PC-3 (cell line): ENCODE measurements at regions of chr4 and their contacts with region 1.

Region 1: GRCh38 chr4:157779081-157779480 is 393.7 kb downstream of the GASK1B start:
- DNase-seq: no peak
- ATAC-seq: no peak
- H3K4me3 ChIP-seq: no peak overlapping the region
- H3K27ac ChIP-seq: no peak overlapping the region
- H3K4me1 ChIP-seq: no peaks in the 10 kb centered on the region
- H3K27me3 ChIP-seq: no peaks in the 10 kb centered on the region
- CTCF ChIP-seq: no peak

Region 2: DNA sequence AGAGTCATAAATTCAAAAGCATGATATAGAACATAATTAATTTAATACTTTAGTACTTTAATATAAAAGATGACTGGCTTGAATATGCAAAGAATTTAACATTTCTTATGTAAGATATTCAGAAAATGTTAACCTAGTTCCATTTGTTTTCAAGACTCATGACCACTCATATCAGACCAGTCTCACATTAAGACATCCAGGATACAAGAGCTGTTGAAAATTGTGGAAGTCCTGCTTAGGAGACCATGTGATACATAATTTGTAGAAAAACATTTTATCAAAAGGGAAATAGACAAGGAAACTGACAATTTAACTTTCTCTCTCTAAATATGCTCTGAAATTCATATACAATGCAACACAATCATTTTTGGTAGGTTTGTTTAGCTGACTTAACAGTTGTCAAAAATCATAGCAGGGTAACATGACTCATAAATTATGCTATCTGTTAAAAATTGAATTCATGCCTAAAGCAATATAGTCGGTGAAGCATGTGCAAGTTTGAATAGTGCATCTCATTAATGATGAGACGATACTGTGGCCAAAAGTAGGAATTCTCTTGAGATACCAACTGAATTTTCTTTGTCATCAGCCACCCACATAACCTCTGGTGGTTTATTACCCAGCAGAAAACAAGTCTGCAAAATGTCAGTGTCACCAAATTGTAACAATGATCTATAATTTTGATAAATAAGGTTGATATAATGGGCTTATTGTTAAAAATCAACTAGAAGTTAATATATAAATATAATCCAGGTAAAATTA is 182.3 kb after region 1 on chr4:
- CTCF ChIA-PET with region 1: no interaction called
- POLR2A ChIA-PET with region 1: no interaction called
- intact Hi-C with region 1: loop called (anchors 5 kb)
- DNase-seq: peak; percentile 10
- ATAC-seq: peak; percentile 38; the same call in 1 of the 2 replicates
- H3K4me3 ChIP-seq: no peak overlapping the region
- H3K27ac ChIP-seq: no peak overlapping the region
- H3K4me1 ChIP-seq: no peaks in the 10 kb centered on the region
- H3K27me3 ChIP-seq: no peaks in the 10 kb centered on the region
- CTCF ChIP-seq: no peak